Activated CD4-positive, alpha-beta T cell treated with anti-CD3 and anti-CD28 coated beads for 36 hours (primary cell): ENCODE measurements at regions of chr18 and their contacts with region 1.

Region 1: DNA sequence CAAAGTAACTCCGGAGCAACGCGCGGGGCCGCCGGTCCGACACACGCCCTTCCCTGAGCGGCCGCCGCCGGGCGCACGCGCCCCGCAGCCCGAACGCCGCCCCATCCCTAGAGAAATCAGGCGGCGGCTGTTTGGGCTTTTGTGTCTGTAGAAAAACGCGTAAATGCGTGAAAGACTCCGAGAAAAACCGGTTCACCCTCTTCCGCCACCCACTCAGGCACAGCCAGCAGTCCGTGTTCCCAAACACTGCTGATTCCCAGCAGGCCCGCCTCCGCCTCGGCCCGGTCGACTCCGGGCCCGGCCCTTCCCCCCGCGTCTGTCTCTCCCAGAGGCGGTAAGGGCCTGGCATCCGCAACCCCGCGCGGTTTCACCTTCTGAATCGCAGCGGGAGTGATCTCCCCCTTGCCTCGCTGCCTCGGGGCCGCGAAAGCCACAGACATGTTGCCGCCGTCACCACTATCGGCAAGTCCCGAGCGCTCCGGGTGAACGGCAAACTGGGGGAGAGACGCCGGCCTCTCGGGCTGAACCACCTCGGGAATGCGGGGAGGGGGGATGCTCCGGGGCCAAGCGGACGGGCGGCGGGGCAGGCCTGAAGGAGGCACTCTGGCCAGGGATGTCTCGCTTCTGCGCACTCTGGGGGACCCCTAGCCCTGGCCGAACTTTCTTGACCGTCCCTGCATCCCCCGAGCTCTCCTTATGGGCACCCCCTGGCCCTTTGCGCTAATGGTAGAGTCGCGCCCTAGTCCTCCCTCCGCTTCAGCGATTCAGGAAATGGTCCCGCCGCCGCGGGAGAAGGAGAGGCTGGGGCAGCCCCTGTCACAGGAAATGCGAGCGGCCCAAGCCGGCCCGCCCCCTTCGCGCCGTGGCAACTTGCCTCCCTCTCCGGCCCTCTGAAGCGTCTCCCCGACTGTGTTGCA is at the start of gene SS18:
- DNase-seq: peak; percentile 95
- ATAC-seq: peak; percentile 85
- H3K4me3 Mint-ChIP-seq: peak within 1 kb of the TSS; percentile 77
- H3K27ac Mint-ChIP-seq: peak within 1 kb of the TSS; percentile 94
- H3K4me1 Mint-ChIP-seq: peaks cover 33% of the 10 kb centered on the region
- H3K27me3 Mint-ChIP-seq: no peaks in the 10 kb centered on the region
- total RNA-seq, gene SS18: 57.8 to 69.7 TPM

Region 2: GRCh38 chr18:24368749-24369148 is 1721.6 kb before region 1 on chr18:
- CTCF ChIA-PET with region 1: no interaction called
- POLR2A ChIA-PET with region 1: no interaction called
- intact Hi-C with region 1: loop called in 1 of 2 experiments (anchors 5 kb)
- DNase-seq: peak; percentile 77
- ATAC-seq: peak; percentile 88
- H3K4me3 Mint-ChIP-seq: peak overlapping the region; percentile 22
- H3K27ac Mint-ChIP-seq: peak overlapping the region; percentile 77
- H3K4me1 Mint-ChIP-seq: peaks cover 28% of the 10 kb centered on the region
- H3K27me3 Mint-ChIP-seq: peaks cover 3% of the 10 kb centered on the region

Region 3: DNA sequence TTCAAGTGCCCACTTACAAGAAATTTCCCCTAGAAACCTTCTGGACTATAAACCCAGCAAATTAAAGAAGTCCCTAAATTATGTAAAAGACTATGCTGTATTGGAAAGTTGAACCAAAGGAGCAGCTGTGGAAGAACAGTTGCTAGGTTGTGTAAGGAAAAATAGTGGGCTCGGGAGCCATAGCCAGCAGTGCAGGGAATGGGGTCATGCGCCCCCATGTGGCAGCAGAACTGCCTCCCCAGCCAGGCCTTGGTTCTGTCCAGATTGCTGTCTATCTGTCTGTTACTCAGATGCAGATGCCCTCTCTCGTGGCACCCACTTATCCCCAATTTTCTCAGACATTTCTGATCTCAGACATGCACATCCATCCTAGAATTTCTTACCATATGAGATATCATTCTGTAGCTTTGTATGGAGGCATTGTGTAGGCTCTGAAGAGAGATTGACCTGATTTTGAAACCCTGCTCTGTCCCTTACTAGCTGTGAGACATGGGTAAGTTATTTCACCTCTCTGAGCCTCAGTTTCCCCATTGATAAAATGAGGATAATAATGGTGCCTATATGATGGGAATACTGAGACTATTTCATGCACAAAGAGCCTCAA is 258.3 kb before region 1 on chr18:
- CTCF ChIA-PET with region 1: no interaction called
- POLR2A ChIA-PET with region 1: no interaction called
- intact Hi-C with region 1: no loop called
- DNase-seq: peak; percentile 54
- ATAC-seq: no peak
- H3K4me3 Mint-ChIP-seq: no peak overlapping the region
- H3K27ac Mint-ChIP-seq: no peak overlapping the region
- H3K4me1 Mint-ChIP-seq: no peaks in the 10 kb centered on the region
- H3K27me3 Mint-ChIP-seq: peaks cover 6% of the 10 kb centered on the region

Region 4: DNA sequence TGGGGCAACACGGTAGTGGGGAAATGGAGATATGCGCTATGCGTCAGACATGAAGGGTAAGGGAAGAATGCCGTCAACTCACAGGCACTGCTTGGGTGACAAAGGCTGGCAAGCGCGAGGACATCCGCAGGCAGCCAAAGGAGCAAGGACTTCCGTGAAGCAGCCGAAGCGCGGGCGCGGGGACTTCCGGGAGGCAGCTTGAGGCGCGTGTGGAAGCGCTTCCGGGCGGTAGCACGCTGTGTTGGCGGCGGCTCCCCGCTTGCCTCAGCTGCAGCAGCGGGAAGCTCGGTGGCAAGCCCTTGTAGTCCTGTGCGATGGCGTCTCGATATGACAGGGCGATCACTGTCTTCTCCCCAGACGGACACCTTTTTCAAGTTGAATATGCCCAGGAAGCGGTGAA is 43.3 kb after region 1 on chr18 and contains the start of gene PSMA8:
- CTCF ChIA-PET with region 1: interaction called, 3 read pairs
- POLR2A ChIA-PET with region 1: no interaction called
- intact Hi-C with region 1: loop called in 1 of 2 experiments (anchors 1 kb)
- DNase-seq: peak; percentile 68
- ATAC-seq: peak; percentile 92
- H3K4me3 Mint-ChIP-seq: peak within 1 kb of the TSS; percentile 72
- H3K27ac Mint-ChIP-seq: peak within 1 kb of the TSS; percentile 88
- H3K4me1 Mint-ChIP-seq: no peaks in the 10 kb centered on the region
- H3K27me3 Mint-ChIP-seq: no peaks in the 10 kb centered on the region
- total RNA-seq, gene PSMA8: 1.4 to 2.0 TPM

Region 5: DNA sequence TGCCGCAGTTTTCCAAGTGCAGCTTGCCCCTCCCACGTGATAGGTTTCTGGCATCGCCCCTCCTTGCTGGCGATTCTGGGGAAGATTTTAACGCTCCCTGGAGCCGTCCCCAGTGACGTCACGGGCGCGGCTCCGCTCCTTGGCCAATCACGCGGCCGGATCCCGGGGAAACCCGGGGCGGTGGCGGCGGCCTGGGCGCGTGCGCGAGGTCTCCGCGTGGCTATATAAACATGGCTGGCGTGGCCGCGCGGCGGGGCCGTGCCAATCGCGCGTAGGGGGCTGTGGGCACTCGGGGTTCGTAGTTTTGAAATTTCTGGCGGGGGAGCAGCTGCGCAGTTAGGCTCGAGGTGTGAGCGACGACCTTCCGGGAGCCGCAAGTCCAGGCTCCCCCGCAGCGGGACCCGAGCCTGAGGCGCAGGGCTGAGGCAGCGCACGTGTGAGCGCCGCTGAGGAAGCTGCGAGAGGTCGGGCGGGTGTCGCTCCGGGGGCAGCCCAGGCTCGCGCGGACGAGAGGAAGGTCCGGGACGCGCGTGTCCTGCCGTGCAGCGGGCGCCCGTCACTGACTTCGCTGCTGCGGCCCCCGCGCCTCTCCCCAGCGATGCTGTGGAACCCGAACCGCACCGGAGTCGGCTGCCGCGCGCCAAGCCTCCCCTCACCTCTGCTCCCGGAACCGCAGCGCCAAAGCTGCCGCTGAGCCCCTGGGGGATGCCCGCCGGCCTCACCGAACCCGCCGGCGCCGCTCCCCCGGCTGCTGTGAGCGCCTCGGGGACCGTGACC is 136.0 kb after region 1 on chr18 and contains the start of gene TAF4B:
- CTCF ChIA-PET with region 1: no interaction called
- POLR2A ChIA-PET with region 1: no interaction called
- intact Hi-C with region 1: loop called (anchors 1 kb)
- DNase-seq: peak; percentile 97
- ATAC-seq: peak; percentile 84
- H3K4me3 Mint-ChIP-seq: peak within 1 kb of the TSS; percentile 94
- H3K27ac Mint-ChIP-seq: peak within 1 kb of the TSS; percentile 93
- H3K4me1 Mint-ChIP-seq: peaks cover 34% of the 10 kb centered on the region
- H3K27me3 Mint-ChIP-seq: no peaks in the 10 kb centered on the region
- total RNA-seq, gene TAF4B: 18.7 to 24.0 TPM

Region 6: GRCh38 chr18:27616324-27616723 is 1525.9 kb after region 1 on chr18:
- CTCF ChIA-PET with region 1: no interaction called
- POLR2A ChIA-PET with region 1: no interaction called
- intact Hi-C with region 1: loop called in 1 of 2 experiments (anchors 10 kb)
- DNase-seq: no peak
- ATAC-seq: no peak
- H3K4me3 Mint-ChIP-seq: no peak overlapping the region
- H3K27ac Mint-ChIP-seq: no peak overlapping the region
- H3K4me1 Mint-ChIP-seq: no peaks in the 10 kb centered on the region
- H3K27me3 Mint-ChIP-seq: no peaks in the 10 kb centered on the region